Activated CD4-positive, alpha-beta T cell treated with anti-CD3 and anti-CD28 coated beads, Interleukin-2, amount 10 ng/mL, durations not matched to agents 7 days and 5 days (primary cell): ENCODE measurements at regions of chr2 and their contacts with region 1.

Region 1: DNA sequence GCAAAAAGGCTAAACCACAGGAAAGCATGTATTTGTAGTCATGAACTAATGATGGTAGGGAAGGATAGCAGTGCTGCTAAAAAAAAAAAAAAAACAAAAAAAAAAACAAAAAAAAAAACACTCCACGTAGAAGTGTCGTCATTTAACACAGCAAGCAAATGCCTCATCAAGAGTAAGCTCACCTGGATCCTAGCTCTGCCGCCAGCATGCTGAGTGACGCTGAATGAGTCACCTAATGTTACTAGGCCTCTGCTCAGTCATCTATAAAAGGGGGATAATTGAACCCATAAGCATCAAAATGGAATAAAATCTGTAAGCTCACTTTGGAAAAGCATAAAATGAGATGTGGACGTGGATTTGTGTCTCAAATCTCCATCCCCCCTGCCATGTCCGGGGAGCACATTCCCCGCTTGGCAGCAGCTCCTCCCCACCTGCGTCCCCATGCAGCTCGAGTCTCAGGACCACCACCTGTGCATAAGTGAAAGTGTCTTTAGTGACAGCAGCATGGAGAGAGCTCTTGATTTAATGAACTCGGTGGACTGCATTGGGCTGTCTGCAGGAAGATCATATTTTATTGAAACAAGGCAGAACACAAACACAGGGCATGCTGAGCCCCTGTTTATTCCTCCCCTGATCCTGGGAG is 427.5 kb downstream of the LRATD1 start:
- DNase-seq: no peak
- H3K4me3 Mint-ChIP-seq: no peak overlapping the region
- H3K27ac Mint-ChIP-seq: no peak overlapping the region
- H3K4me1 Mint-ChIP-seq: no peaks in the 10 kb centered on the region
- H3K27me3 Mint-ChIP-seq: peaks cover 10% of the 10 kb centered on the region

Region 2: GRCh38 chr2:15006667-15007066 is 53.3 kb before region 1 on chr2:
- CTCF ChIA-PET with region 1: no interaction called
- POLR2A ChIA-PET with region 1: interaction called, 11 read pairs
- DNase-seq: no peak
- H3K4me3 Mint-ChIP-seq: no peak overlapping the region
- H3K27ac Mint-ChIP-seq: no peak overlapping the region
- H3K4me1 Mint-ChIP-seq: peaks cover 23% of the 10 kb centered on the region
- H3K27me3 Mint-ChIP-seq: peaks cover 2% of the 10 kb centered on the region